ENCODE measurements at regions of chr1 and their contacts with region 1.

Region 1: DNA sequence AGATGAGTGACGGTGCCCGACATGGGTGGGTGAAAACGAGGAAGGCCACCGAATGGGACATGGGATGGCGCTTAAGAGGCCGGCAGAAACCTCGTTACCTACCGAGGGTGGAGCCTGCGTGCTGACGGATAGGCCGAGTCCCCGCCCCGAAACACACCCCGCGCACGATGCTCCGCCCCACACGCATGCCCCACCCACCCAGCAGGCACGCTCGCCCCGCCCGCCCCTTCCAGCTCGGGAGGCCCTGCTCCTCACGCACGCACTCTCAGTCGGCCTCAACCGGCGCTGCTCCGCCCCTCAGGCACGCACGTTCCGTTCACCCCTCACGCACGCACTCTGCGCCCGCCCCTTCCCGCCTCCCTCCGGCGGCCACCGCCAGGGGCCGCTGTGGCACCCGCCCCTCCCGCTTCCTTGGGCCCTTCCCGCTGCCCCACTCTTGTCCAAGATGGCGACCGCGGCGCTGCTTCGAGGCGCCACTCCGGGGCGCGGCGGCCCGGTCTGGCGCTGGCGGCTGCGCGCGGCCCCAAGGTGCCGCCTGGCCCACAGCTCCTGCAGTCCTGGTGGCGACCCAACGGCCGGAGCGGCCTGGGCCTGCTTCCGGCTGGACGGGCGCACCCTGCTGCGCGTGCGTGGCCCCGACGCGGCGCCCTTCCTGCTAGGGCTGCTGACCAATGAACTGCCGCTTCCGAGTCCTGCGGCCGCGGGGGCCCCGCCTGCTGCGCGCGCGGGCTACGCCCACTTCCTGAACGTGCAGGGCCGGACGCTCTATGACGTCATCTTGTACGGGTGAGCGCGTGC is at the start of gene IBA57:
- DNase-seq: peak; percentile 99 to 100 (median 100)
- H3K4me3 ChIP-seq: peak within 1 kb of the TSS; percentile 73 to 76
- H3K4me3 Mint-ChIP-seq: peak within 1 kb of the TSS; percentile 90 to 98 (median 92)
- H3K27ac ChIP-seq: peak within 1 kb of the TSS; percentile 96
- H3K27ac Mint-ChIP-seq: peak within 1 kb of the TSS; percentile 96 to 99 (median 98)
- H3K4me1 ChIP-seq: peaks cover 38% of the 10 kb centered on the region
- H3K4me1 Mint-ChIP-seq: peaks cover 22 to 70% (median 44%) of the 10 kb centered on the region in 4 donors
- H3K27me3 ChIP-seq: no peaks in the 10 kb centered on the region
- H3K27me3 Mint-ChIP-seq: no peaks in the 10 kb centered on the region
- total RNA-seq, gene IBA57: 10.9 to 12.0 TPM

Region 2: GRCh38 chr1:227787513-227788270 is 377.9 kb before region 1 on chr1:
- CTCF ChIA-PET with region 1: no interaction called
- POLR2A ChIA-PET with region 1: interaction called, 5 read pairs
- intact Hi-C with region 1: loop called (anchors 5 kb)
- DNase-seq: peak; percentile 91 to 96 (median 93)
- H3K4me3 ChIP-seq: peak overlapping the region; percentile 69 to 89
- H3K4me3 Mint-ChIP-seq: peak overlapping the region; percentile 83 to 89 (median 84)
- H3K27ac ChIP-seq: peak overlapping the region; percentile 53
- H3K27ac Mint-ChIP-seq: peak overlapping the region; percentile 57 to 86 (median 83)
- H3K4me1 ChIP-seq: peaks cover 28% of the 10 kb centered on the region
- H3K4me1 Mint-ChIP-seq: peaks cover 13 to 46% (median 22%) of the 10 kb centered on the region in 4 donors
- H3K27me3 ChIP-seq: no peaks in the 10 kb centered on the region
- H3K27me3 Mint-ChIP-seq: no peaks in the 10 kb centered on the region

Region 3: GRCh38 chr1:228102791-228103620 is 62.6 kb before region 1 on chr1 and contains the start of gene C1orf35:
- CTCF ChIA-PET with region 1: interaction called, 3 read pairs
- POLR2A ChIA-PET with region 1: interaction called, 26 read pairs
- intact Hi-C with region 1: loop called (anchors 1 kb)
- DNase-seq: peak; percentile 93 to 95 (median 94)
- H3K4me3 ChIP-seq: peak within 1 kb of the TSS; percentile 54 to 98
- H3K4me3 Mint-ChIP-seq: peak within 1 kb of the TSS; percentile 90 to 95 (median 94)
- H3K27ac ChIP-seq: peak within 1 kb of the TSS; percentile 85
- H3K27ac Mint-ChIP-seq: peak within 1 kb of the TSS; percentile 93 to 97 (median 97)
- H3K4me1 ChIP-seq: peaks cover 25% of the 10 kb centered on the region
- H3K4me1 Mint-ChIP-seq: peaks cover 6 to 61% (median 33%) of the 10 kb centered on the region in 4 donors
- H3K27me3 ChIP-seq: no peaks in the 10 kb centered on the region
- H3K27me3 Mint-ChIP-seq: no peaks in the 10 kb centered on the region
- total RNA-seq, gene C1orf35: 28.5 to 30.7 TPM

Region 4: GRCh38 chr1:228139944-228140656 is 25.5 kb before region 1 on chr1 and contains the start of gene GUK1:
- CTCF ChIA-PET with region 1: interaction called, 50 read pairs
- POLR2A ChIA-PET with region 1: interaction called, 127 read pairs
- intact Hi-C with region 1: loop called (anchors 1 kb)
- DNase-seq: peak; percentile 100
- H3K4me3 ChIP-seq: peak within 1 kb of the TSS; percentile 94 to 99
- H3K4me3 Mint-ChIP-seq: peak within 1 kb of the TSS; percentile 92 to 97 (median 96)
- H3K27ac ChIP-seq: peak within 1 kb of the TSS; percentile 98
- H3K27ac Mint-ChIP-seq: peak within 1 kb of the TSS; percentile 91 to 100 (median 100)
- H3K4me1 ChIP-seq: peaks cover 47% of the 10 kb centered on the region
- H3K4me1 Mint-ChIP-seq: peaks cover 14 to 47% (median 35%) of the 10 kb centered on the region in 4 donors
- H3K27me3 ChIP-seq: no peaks in the 10 kb centered on the region
- H3K27me3 Mint-ChIP-seq: peaks cover 0 to 7% of the 10 kb centered on the region in 2 donors
- total RNA-seq, gene GUK1: 179 to 185 TPM

Region 5: GRCh38 chr1:228185641-228185965 is 20.0 kb after region 1 on chr1:
- CTCF ChIA-PET with region 1: interaction called, 11 read pairs
- POLR2A ChIA-PET with region 1: interaction called, 4 read pairs
- intact Hi-C with region 1: loop called (anchors 1 kb)
- DNase-seq: peak; percentile 71 to 93 (median 81)
- H3K4me3 ChIP-seq: no peak overlapping the region
- H3K4me3 Mint-ChIP-seq: peak overlapping the region; percentile 52 to 81 (median 71)
- H3K27ac ChIP-seq: peak overlapping the region; percentile 32
- H3K27ac Mint-ChIP-seq: peak overlapping the region; percentile 93 to 96 (median 94)
- H3K4me1 ChIP-seq: peaks cover 26% of the 10 kb centered on the region
- H3K4me1 Mint-ChIP-seq: peaks cover 24 to 42% (median 30%) of the 10 kb centered on the region in 4 donors
- H3K27me3 ChIP-seq: no peaks in the 10 kb centered on the region
- H3K27me3 Mint-ChIP-seq: peaks cover 0 to 2% of the 10 kb centered on the region in 2 donors

Region 6: DNA sequence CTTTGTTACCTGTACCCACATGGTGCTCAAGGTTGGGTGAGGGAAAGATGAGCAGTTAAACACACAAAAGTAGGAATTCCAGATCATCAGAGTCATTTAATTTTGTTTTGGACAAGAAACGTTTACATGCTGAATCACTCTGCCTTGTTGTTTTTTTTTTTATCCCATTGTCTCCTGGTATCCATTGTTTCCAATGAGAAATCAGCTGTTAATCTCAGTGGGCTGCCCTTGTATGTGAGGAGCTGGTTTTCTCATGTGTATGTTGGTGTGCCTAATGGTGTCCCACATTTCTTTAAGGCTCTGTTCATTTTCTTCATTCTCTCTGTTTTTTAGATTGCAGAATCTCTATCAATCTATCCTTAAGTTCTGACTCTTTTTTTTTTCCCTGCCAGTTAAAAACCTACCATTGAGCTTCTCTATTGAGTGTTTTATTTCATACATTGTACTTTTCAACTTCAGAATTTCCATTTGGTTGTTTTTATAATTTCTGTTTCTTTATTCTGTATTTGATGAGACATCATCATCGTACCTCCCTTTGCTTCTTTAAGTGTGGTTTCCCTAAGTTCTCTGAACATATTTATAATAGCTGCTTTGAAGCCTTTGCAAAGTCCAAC is 33.5 kb after region 1 on chr1:
- CTCF ChIA-PET with region 1: no interaction called
- POLR2A ChIA-PET with region 1: no interaction called
- intact Hi-C with region 1: no loop called
- DNase-seq: no peak
- H3K4me3 ChIP-seq: no peak overlapping the region
- H3K4me3 Mint-ChIP-seq: peak overlapping the region in 1 of 8 donors; percentile 22
- H3K27ac ChIP-seq: no peak overlapping the region
- H3K27ac Mint-ChIP-seq: peak overlapping the region in 2 of 7 donors; percentile 25 to 54
- H3K4me1 ChIP-seq: no peaks in the 10 kb centered on the region
- H3K4me1 Mint-ChIP-seq: no peaks in the 10 kb centered on the region
- H3K27me3 ChIP-seq: no peaks in the 10 kb centered on the region
- H3K27me3 Mint-ChIP-seq: peaks cover 0 to 2% of the 10 kb centered on the region in 2 donors

Region 7: DNA sequence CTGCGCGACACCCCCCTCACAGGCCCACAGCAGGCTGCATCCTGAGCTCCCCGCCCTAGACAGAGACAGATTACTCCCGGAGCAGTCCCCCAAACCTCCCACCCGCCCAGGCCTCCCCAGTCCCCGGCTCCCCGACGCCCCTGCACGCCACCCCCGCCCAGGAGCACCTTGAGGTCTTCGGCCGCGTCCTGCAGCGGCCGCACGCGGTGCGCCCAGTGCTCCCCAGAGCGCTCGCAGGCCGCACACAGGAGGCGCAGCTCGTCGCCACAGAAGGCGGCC is 240.4 kb after region 1 on chr1:
- CTCF ChIA-PET with region 1: no interaction called
- POLR2A ChIA-PET with region 1: interaction called, 18 read pairs
- intact Hi-C with region 1: loop called (anchors 1 kb)
- DNase-seq: no peak
- H3K4me3 ChIP-seq: peak overlapping the region; percentile 29 to 72
- H3K4me3 Mint-ChIP-seq: peak overlapping the region; percentile 92 to 97 (median 94)
- H3K27ac ChIP-seq: peak overlapping the region; percentile 81
- H3K27ac Mint-ChIP-seq: peak overlapping the region; percentile 47 to 92 (median 87)
- H3K4me1 ChIP-seq: peaks cover 52% of the 10 kb centered on the region
- H3K4me1 Mint-ChIP-seq: peaks cover 29 to 72% (median 50%) of the 10 kb centered on the region in 4 donors
- H3K27me3 ChIP-seq: no peaks in the 10 kb centered on the region
- H3K27me3 Mint-ChIP-seq: no peaks in the 10 kb centered on the region

Measured in CD4-positive, alpha-beta memory T cell (primary cell).